ENCODE measurements at regions of chr2 and their contacts with region 1.

Region 1: DNA sequence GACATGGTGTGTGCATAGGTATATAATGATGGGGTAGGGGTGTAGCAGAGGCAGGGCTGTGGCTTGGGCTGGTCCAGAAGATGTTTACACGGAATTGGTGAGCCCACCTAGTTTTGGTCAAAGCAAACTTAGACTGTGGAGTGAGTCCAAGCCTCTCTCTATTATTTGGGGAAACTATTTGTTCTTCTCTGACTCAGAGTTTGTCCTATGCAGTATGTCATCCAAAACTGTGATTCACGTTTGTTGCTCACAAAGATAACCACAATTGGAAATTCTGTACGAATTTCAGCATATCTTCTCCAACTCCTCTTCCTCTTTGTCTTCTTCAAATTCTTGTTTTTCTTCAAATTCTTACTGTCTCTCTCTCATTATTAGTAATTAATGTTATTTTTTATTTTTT is 292.9 kb downstream of the XIRP2 start:
- DNase-seq: no peak
- ATAC-seq: no peak
- H3K4me3 ChIP-seq: no peak overlapping the region
- H3K27ac ChIP-seq: no peak overlapping the region
- H3K4me1 ChIP-seq: no peaks in the 10 kb centered on the region
- H3K27me3 ChIP-seq: no peaks in the 10 kb centered on the region
- CTCF ChIP-seq: no peak
- POLR2A ChIP-seq: no peak

Region 2: DNA sequence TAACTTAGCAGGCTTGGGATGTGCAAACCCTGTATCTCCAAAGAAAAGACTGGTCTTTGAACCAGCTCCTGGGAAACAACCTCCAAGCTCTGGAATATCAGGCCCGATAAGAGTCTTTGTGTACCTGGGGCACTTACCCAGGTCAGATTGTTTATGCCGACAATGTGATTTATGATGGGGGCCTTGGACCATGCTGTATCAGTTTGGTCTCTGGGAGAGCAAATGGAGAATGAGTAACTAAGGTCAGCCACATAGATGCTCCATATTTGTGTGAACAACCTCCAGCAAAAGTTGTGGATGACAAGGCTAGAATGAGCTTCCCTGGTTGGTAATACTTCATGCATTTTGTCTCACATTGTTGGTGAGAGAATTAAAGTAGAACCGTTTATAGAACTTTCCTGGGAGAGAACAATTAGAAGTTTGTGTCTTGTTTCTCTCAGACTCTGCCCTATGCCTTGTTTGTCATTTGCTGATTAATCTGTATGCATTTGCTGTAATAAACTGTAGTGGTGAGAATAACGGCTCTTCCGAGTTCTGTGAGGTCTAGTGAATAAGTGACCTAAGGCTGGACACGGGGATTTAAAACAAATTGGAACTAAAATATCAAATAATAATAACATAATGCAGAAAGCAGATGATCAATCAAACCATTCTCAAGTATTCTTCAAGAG is 33.7 kb before region 1 on chr2:
- intact Hi-C with region 1: loop called in 6 of 10 experiments (anchors 5 kb)
- DNase-seq: no peak
- ATAC-seq: no peak
- H3K4me3 ChIP-seq: no peak overlapping the region
- H3K27ac ChIP-seq: no peak overlapping the region
- H3K4me1 ChIP-seq: peaks cover 0 to 9% (median 0%) of the 10 kb centered on the region in 12 donors
- H3K27me3 ChIP-seq: no peaks in the 10 kb centered on the region
- CTCF ChIP-seq: no peak
- POLR2A ChIP-seq: no peak

Region 3: DNA sequence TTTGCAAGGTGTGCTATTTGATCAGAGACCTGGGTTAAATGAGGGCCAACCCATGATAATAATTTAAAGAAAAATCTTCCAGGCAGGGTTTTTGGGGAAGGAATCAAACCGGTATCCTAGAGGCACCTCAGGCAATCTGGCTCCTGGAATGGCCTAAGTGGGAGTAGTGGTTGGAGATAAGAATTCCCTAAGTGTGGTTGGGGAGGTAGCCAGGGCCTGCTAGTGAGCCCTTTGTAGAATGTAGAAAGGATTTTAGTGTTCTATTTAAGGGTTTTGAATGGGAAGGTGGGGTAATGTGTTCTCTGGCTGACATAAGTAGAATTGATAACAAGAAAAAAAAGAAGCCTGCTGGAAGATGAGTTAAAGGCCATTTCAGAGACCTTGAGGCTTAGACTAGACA is 129.3 kb after region 1 on chr2:
- intact Hi-C with region 1: no loop called
- DNase-seq: no peak
- ATAC-seq: peak in 2 of 4 donors; percentile 65 to 90
- H3K4me3 ChIP-seq: no peak overlapping the region
- H3K27ac ChIP-seq: no peak overlapping the region
- H3K4me1 ChIP-seq: no peaks in the 10 kb centered on the region
- H3K27me3 ChIP-seq: no peaks in the 10 kb centered on the region
- CTCF ChIP-seq: no peak
- POLR2A ChIP-seq: no peak

Measured in heart left ventricle (tissue), 16 donors.